ENCODE measurements at regions of chr13 and their contacts with region 1.

Region 1: DNA sequence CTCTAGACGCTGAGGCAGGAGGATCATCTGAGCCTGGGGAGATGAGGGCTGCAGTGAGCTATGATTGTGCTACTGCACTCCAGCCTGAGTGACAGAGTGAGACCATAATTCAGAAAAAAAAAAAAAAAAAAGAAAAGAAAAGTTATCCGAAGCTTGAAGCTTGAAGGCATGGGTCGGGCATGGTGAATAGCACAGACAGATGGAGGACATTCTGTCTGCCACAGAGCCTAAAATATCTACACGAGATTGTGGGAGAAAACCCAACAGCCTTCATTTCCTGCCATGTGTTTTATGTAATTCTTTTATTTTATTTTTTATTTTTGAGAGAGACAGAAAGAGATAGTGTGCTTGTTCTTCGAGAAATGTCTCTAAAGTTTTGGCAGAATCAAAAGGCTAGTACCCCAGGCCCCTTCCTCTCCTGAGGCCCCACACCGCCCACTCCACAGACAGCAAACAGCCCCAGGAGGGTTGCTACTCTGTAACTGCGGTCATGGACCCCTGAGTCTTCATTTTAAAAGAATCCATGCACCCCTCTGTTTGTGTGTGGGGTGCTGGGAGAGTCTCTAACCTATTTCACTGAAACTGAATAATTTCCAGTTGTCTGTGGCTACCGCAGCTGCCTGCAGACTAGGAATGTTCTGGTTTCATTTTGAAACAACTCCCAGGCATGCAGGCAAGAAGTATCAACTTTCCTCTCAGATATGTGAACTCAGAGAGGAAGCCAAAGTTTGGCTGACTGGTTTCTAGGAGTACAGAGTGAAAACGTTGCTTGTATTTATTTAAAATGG is 38.4 kb upstream of the RCBTB2 start:
- DNase-seq: no peak

Region 2: DNA sequence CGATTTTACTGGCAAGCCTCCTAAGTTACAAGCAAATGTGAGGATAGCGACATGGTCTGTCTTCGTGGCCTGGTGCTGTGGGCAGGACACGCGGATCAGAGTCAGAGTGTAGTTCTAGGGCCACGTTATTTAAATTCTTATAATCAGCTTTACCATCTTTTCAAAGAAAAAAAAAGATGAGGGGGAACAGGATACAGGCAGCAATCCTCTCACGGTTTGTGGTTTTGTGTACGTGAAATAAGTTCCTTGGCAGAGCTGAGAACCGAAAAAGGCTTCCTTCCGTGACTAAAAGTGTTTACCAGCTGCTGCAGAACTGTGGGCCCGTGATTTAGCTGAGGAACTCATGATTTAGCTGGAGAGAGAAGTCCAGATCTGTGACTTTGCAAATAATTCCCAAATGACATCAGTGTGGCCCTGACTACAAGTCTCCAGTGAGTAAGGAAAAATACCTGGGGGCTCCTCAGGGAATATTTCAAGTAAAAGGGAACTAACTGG is 65.7 kb before region 1 on chr13:
- intact Hi-C with region 1: loop called (anchors 5 kb)
- DNase-seq: no peak

Region 3: GRCh38 chr13:48532506-48533499 is 38.5 kb before region 1 on chr13 and contains the start of gene RCBTB2:
- intact Hi-C with region 1: loop called (anchors 2 kb)
- DNase-seq: peak; percentile 100
- total RNA-seq, gene RCBTB2: 8.0 TPM